ENCODE measurements at regions of chr10 and their contacts with region 1.

Region 1: DNA sequence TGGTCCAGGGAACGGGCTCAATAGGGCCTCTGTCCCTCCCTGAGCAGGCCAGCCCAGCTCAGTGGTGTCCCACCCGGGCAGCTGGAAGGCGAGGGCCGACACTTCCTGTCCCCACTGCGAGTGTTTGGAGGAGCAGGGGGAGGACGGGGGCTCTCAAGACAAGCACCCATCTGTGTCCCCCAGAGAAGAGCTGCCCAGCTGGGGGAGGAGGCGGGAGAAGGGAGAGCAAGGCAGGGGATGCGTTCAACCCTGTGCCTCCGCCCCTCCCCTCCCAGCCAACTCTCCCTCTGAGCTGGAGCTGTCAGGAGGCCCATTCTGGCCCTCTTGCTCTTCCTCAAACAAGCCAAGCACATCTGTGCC is 35.7 kb downstream of the ZCCHC24 start:
- DNase-seq: no peak
- H3K4me3 ChIP-seq: no peak overlapping the region
- CTCF ChIP-seq: no peak

Region 2: DNA sequence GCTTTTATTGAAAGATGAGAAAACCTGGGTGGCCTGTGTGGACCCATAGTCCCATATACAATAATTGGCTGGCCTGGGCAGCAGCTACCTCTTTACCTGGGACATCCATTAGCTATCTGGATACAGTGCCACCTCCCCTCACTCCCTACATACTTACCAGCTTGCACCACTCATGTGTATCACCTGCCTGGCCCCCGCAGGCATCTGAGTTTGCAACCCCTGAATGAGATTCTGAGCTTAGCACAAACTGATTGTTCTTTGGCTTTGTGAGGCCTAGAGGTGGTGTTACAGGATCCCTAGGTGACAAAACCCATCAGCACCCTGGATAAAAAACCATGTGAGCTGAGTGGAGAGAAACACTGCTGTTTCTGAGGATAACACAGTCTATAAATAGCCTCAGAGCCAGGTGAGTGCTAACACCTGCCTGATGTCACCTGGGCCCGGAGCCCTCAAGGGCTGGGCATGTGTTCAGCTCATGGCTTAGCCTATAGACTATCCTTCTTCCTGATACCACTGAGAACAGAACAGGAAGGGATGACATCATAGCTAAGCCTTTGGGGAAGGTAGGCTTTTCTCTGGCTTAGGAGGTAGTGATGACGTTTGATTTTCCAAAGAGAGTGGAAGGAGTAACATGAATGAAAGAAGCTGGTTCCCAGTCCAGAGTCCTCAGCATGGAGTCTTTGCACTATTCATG is 65.1 kb before region 1 on chr10:
- in situ Hi-C with region 1: loop called (anchors 5 kb)
- DNase-seq: no peak
- H3K4me3 ChIP-seq: no peak overlapping the region
- CTCF ChIP-seq: no peak

Region 3: DNA sequence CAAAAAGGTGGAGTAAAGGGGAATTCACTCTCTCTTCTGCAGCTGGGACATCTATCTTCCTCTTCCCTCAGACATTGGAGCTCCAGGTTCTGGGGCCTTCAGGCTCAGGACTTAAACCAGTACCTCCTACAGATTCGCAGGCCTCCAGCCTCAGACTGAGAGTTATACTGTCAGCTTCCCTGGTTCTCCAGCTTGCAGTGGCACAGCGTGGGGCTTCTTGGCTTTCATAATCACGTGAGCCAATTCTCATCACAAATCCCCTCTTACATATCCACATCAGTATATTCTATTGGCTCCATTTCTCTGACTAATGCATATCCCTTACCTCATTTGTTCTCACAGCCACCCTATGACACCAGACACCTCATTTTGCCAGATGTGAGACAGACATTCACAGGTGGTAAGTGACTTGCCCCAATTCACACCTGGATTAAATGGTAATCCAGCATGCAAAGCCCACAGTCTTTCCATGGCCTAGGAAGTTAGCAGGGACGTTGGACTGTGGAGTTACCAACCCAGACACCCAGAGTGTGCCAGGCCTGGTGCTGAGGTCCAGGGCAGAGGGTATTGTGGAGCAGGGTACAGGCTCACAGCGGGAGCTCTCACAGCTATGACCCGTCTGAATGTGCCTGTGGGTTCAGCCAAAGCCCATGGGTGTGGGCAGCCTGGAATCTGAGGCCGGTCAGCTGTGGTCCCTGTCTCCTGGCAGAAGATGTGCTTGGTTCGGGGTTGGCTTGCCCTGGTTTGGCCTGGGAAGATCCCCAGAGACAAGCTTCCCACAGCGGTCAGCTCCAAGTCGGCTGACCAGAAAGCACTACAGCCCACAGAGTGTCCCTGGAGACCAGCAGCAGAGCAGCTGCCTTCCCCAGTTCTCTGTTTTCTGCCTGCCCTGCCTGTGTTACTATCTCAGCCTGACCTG is 54.1 kb after region 1 on chr10:
- in situ Hi-C with region 1: loop called (anchors 5 kb)
- DNase-seq: no peak
- H3K4me3 ChIP-seq: no peak overlapping the region
- CTCF ChIP-seq: no peak

Region 4: DNA sequence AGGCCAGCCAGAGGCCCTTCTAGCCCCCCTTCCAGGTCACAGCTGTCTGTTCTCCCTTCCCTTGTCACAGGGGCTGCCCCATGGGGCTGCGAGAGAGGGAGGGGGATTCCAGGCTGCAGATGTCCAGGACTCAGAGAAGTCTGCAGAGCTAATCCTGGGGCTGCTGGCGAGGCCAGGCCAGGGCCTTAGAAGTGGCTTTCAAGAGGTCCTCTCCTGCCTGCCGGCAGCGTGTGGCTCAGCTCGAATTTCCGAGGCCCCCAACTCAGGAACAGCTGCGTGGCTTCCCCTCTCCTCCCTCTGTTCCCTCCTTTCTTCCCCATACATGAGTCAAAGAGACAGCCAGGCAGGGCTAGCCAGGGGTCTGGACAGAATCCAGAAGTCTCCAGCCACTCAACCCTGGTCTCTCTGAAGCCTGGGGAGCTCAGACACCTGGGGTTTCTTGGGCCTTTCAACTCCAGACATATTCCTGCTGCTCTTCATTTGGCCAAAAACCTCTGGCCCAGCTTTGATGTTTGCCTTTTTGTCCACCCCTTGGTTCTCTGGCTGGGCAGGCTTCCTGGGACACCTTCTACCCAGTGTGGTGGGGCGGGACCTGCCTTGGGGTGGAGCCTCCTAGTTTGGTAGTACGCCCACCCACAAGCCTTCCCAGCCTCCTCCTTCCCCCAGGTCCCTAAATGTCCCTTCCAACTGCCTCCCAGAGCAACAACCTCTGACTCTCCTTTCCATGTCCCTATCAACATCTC is 80.9 kb after region 1 on chr10:
- in situ Hi-C with region 1: loop called (anchors 5 kb)
- DNase-seq: peak; percentile 40
- H3K4me3 ChIP-seq: no peak overlapping the region
- CTCF ChIP-seq: no peak

Measured in astrocyte of the cerebellum (primary cell).